Activated CD4-positive, alpha-beta memory T cell treated with anti-CD3 and anti-CD28 coated beads for 36 hours (primary cell): ENCODE measurements at regions of chr1 and their contacts with region 1.

Region 1: GRCh38 chr1:7953850-7954609 is 7.5 kb upstream of the PARK7 start:
- DNase-seq: peak; percentile 92
- H3K4me3 Mint-ChIP-seq: peak overlapping the region; percentile 88
- H3K27ac Mint-ChIP-seq: peak overlapping the region; percentile 95
- H3K4me1 Mint-ChIP-seq: peaks cover 44% of the 10 kb centered on the region
- H3K27me3 Mint-ChIP-seq: no peaks in the 10 kb centered on the region

Region 2: DNA sequence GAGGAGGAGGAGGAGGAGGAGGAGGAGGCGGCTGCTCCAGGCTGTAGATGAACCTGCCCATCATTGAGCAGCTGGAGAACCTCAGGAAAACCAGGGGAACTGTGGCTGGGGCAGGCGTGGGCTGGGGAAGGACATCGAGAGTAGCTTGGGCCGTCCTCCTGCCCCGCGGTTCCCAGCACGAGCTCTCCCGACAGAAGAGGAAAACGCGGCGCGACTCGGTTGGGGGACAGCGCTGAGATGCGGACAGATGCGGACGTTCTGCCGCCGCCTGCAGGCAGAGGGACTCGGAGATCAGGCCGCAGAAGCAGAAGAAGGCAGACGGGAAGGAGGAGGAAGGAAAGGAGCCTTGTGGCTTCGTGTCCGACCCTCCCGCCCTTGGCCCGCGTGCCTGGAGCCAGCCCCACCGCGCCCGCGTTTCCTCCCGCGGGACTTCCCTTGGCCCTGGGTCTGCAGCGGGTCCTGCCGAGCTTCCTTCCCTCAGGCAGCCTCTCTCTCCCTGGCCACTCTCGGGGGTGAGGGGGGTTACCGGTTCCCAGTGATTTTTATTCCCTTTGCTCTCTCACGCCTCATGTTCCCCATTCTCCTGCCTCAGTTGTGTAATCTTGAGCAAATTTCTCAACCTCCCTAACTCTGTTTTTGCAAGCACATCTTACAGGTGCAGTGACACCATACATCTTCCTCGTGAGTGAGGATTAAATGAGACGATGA is 11.7 kb before region 1 on chr1:
- CTCF ChIA-PET with region 1: interaction called, 15 read pairs
- POLR2A ChIA-PET with region 1: interaction called, 20 read pairs
- intact Hi-C with region 1: loop called (anchors 1 kb)
- DNase-seq: peak; percentile 58
- H3K4me3 Mint-ChIP-seq: peak overlapping the region; percentile 44
- H3K27ac Mint-ChIP-seq: peak overlapping the region; percentile 80
- H3K4me1 Mint-ChIP-seq: peaks cover 46% of the 10 kb centered on the region
- H3K27me3 Mint-ChIP-seq: peaks cover 9% of the 10 kb centered on the region